K562 (cell line): ENCODE measurements at regions of chr9 and their contacts with region 1.

Region 1: DNA sequence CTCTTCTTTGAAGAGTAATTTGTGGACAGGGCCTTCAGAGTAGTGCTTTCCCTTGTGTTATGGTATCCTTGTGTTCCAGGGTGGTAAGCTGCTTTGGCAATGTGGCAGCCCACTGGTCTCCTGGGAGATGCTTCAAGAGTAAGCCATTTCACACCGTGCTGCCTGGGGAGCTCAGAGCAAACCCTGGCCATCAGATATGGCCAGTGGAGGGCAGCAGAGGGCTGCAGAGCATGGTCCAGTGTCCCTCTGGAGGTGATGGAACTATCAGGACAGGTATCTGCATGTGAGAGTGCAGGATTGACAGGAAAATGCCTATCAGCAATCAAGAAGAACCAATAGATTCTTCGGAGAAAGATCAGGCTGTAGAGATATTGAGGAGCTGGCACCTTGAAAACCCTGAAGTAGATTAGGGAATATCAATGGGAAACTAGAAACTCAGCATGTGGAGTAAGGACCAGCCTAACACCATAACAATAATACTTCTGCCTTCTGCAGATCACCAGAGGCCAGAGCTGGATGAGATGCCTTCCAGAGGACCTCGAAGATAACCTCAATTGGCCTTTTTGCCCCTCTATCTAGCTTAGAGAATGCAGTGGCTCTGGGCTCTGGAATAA is 90.8 kb downstream of the PLPPR1 start:
- DNase-seq: peak; percentile 29 to 47 (median 38)
- ATAC-seq: peak; percentile 88
- H3K4me3 ChIP-seq: no peak overlapping the region
- H3K27ac ChIP-seq: no peak overlapping the region
- H3K4me1 ChIP-seq: no peaks in the 10 kb centered on the region
- H3K27me3 ChIP-seq: no peaks in the 10 kb centered on the region
- CTCF ChIP-seq: peak; percentile 54 to 70 (median 54)
- EP300 ChIP-seq: no peak
- POLR2A ChIP-seq: no peak
- RAD21 ChIP-seq: peak; percentile 34 to 61

Region 2: GRCh38 chr9:101212661-101213060 is 93.3 kb after region 1 on chr9:
- CTCF ChIA-PET with region 1: no interaction called
- POLR2A ChIA-PET with region 1: no interaction called
- in situ Hi-C with region 1: no loop called
- intact Hi-C with region 1: no loop called
- DNase-seq: no peak
- ATAC-seq: no peak
- H3K4me3 ChIP-seq: no peak overlapping the region
- H3K27ac ChIP-seq: no peak overlapping the region
- H3K4me1 ChIP-seq: no peaks in the 10 kb centered on the region
- H3K27me3 ChIP-seq: no peaks in the 10 kb centered on the region
- CTCF ChIP-seq: no peak
- EP300 ChIP-seq: no peak
- POLR2A ChIP-seq: no peak
- RAD21 ChIP-seq: no peak

Region 3: GRCh38 chr9:101229606-101230005 is 110.3 kb after region 1 on chr9:
- CTCF ChIA-PET with region 1: no interaction called
- POLR2A ChIA-PET with region 1: no interaction called
- in situ Hi-C with region 1: no loop called
- intact Hi-C with region 1: loop called (anchors 5 kb)
- DNase-seq: no peak
- ATAC-seq: no peak
- H3K4me3 ChIP-seq: no peak overlapping the region
- H3K27ac ChIP-seq: no peak overlapping the region
- H3K4me1 ChIP-seq: no peaks in the 10 kb centered on the region
- H3K27me3 ChIP-seq: no peaks in the 10 kb centered on the region
- CTCF ChIP-seq: no peak
- EP300 ChIP-seq: no peak
- POLR2A ChIP-seq: no peak
- RAD21 ChIP-seq: no peak

Region 4: DNA sequence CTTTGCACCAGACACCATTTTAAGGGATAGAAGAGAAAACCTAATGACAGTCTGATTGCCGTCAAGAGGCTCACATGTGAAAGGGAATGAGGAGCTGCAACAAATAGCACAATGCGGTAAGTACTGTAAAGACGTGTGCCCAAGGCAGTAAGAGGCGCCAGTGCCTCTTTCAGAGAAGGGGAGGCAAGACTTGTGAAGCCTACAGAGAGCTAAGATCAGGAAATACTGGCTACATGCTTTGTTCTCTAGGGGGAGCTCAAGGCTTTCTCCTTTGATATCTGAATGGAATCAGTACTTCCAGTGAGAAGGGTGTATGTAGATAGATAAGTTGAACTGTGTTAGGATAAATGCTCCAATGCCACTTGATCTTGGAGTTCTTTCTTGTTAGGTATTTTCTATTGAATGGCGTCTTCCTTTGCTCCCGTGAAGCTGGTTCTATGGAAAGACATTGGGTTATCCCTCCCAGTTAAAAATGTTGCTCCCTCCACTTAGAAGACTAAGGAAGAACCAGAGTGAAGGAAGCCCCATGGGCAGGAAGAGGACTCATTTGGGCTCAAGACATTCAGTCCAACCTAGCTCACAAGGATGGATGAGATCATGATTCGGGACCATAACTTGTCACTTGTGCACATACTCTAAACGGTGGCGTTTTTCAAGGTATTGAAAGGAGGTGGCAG is 339.8 kb after region 1 on chr9:
- CTCF ChIA-PET with region 1: no interaction called
- POLR2A ChIA-PET with region 1: interaction called, 3 read pairs
- in situ Hi-C with region 1: no loop called
- intact Hi-C with region 1: loop called (anchors 10 kb)
- DNase-seq: peak in 3 of 4 experiments; percentile 18 to 70 (median 43)
- ATAC-seq: peak; percentile 92
- H3K4me3 ChIP-seq: no peak overlapping the region
- H3K27ac ChIP-seq: no peak overlapping the region
- H3K4me1 ChIP-seq: peaks cover 0 to 15% of the 10 kb centered on the region in 2 experiments; a peak in 3 of 5 replicates
- H3K27me3 ChIP-seq: no peaks in the 10 kb centered on the region
- CTCF ChIP-seq: peak; percentile 70 to 82 (median 75)
- EP300 ChIP-seq: no peak
- POLR2A ChIP-seq: no peak
- RAD21 ChIP-seq: peak; percentile 78 to 82